Ascending aorta (tissue), 2 donors: ENCODE measurements at regions of chr4 and their contacts with region 1.

Region 1: DNA sequence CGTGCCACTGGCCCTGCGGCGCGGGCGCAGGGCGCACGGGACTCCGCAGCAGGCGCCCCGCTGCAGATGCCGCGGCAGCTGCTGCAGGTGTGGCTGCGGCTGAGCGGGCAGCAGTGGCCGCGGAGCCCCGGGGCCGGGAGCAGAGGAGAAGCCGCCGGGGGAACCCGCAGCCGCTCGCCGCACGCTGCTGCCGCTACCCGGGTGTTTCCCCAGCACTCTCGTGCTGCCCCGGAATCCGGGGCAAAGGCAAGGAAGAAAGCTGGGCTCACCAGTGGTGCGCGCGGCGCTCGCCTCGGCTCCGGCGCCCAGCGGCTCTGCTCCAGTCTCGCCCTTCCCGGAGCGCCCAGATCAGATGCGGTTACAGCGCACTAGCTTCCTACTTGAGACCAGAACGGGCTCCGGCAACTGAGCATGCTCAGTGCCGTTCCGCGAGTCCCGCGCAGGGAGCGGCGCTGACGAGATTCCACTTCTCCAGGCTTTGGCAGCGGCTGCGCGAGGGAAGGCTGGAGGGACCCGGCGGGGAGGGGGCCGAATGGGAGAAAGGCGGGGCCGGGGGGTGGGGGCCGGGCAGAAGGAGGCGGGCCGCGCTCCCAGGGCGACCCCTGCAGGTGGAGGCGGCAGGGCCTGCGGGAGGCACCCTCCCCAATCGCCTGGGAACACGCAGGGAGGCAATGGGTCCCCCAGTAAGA is at the start of gene APBB2:
- DNase-seq: peak; percentile 69 to 97
- H3K4me3 ChIP-seq: peak within 1 kb of the TSS; percentile 88 to 92
- H3K27ac ChIP-seq: peak within 1 kb of the TSS; percentile 87 to 91
- H3K4me1 ChIP-seq: peaks cover 7 to 16% of the 10 kb centered on the region in 2 donors
- H3K27me3 ChIP-seq: no peaks in the 10 kb centered on the region
- CTCF ChIP-seq: peak; percentile 63 to 92 (median 88)
- total RNA-seq, gene APBB2: 51.4 TPM

Region 2: DNA sequence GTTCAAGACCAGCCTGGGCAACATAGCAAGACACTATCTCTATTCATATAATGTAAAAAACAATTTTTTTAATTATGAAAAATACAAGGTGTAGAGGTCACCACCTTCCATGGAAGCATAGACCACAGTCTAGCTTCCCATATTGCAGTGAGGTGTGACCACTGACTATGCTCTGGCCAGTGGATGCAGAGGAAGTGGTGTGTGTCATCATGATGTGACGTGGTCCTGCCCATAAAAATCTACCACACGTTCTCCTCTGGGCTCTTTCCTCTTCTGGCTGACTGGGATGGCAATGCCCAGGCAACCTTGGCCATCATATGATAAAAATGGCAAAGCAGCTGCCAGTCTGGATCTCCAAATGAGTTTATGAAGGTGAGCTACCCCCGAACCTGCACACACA is 650.3 kb before region 1 on chr4:
- intact Hi-C with region 1: no loop called
- DNase-seq: no peak
- H3K4me3 ChIP-seq: no peak overlapping the region
- H3K27ac ChIP-seq: no peak overlapping the region
- H3K4me1 ChIP-seq: no peaks in the 10 kb centered on the region
- H3K27me3 ChIP-seq: no peaks in the 10 kb centered on the region
- CTCF ChIP-seq: no peak

Region 3: DNA sequence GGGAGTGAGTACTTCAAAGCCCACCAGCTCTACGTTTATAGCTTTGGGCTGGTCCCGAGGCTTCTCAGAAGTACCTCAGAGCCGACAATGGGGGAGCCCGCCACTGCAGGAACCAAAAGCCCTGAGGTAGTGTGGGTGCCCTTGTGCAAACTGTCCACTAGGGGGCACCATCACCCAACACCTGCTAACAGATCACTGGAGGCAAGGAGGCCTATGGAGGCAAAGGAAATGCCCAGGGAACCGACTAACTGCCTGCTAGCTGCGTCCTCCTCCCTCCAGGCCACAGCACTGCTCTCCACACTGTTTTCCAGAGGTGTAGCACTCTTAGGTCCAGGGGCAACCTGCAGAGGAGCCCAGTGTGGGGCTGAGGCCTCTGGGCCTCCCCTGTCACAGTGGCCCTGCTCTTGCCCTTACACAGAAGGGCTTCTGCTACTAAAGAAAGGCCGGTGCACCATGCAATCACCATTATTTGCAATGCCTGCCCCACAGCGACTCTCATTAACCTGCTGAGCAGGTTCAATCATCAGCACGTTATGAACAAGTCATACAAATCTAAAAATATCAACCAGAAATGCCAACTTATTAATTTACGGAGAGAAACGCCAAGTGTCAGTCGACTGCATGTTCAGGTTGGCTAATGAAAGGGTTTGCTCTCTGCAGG is 305.4 kb before region 1 on chr4:
- intact Hi-C with region 1: loop called (anchors 1 kb)
- DNase-seq: peak; percentile 26 to 90
- H3K4me3 ChIP-seq: peak overlapping the region in 1 of 2 donors; percentile 4
- H3K27ac ChIP-seq: peak overlapping the region; percentile 79 to 91
- H3K4me1 ChIP-seq: peaks cover 12 to 25% of the 10 kb centered on the region in 2 donors
- H3K27me3 ChIP-seq: no peaks in the 10 kb centered on the region
- CTCF ChIP-seq: peak; percentile 92 to 94 (median 92)

Region 4: DNA sequence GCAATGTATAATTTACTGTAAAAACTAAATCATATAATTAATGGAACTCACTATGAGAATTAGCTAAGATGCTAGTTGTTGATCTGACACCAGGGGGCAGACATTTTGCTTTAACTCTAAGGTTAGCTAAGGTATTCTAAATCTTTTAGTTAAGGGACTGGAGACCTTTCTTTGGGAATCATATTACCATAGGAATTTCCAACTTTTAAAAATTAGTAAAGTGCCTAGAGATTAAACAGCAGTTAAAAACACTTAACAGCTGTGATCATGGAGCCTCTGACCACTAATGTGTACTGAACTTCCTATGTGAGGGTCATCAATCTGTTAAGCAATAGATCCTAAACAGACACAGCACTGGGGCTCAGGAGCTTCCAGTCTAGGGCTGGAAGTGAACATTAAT is 237.9 kb before region 1 on chr4:
- intact Hi-C with region 1: loop called (anchors 1 kb)
- DNase-seq: no peak
- H3K4me3 ChIP-seq: no peak overlapping the region
- H3K27ac ChIP-seq: no peak overlapping the region
- H3K4me1 ChIP-seq: no peaks in the 10 kb centered on the region
- H3K27me3 ChIP-seq: no peaks in the 10 kb centered on the region
- CTCF ChIP-seq: peak; percentile 50 to 79 (median 53)

Region 5: GRCh38 chr4:41120297-41121217 is 93.7 kb before region 1 on chr4:
- intact Hi-C with region 1: loop called (anchors 2 kb)
- DNase-seq: peak; percentile 20 to 85
- H3K4me3 ChIP-seq: peak overlapping the region; percentile 30 to 46
- H3K27ac ChIP-seq: peak overlapping the region; percentile 69 to 70
- H3K4me1 ChIP-seq: peaks cover 4 to 37% of the 10 kb centered on the region in 2 donors
- H3K27me3 ChIP-seq: no peaks in the 10 kb centered on the region
- CTCF ChIP-seq: no peak

Region 6: GRCh38 chr4:41160012-41160789 is 54.1 kb before region 1 on chr4:
- intact Hi-C with region 1: loop called (anchors 2 kb)
- DNase-seq: no peak
- H3K4me3 ChIP-seq: no peak overlapping the region
- H3K27ac ChIP-seq: no peak overlapping the region
- H3K4me1 ChIP-seq: peaks cover 0 to 21% of the 10 kb centered on the region in 2 donors
- H3K27me3 ChIP-seq: no peaks in the 10 kb centered on the region
- CTCF ChIP-seq: no peak

Region 7: DNA sequence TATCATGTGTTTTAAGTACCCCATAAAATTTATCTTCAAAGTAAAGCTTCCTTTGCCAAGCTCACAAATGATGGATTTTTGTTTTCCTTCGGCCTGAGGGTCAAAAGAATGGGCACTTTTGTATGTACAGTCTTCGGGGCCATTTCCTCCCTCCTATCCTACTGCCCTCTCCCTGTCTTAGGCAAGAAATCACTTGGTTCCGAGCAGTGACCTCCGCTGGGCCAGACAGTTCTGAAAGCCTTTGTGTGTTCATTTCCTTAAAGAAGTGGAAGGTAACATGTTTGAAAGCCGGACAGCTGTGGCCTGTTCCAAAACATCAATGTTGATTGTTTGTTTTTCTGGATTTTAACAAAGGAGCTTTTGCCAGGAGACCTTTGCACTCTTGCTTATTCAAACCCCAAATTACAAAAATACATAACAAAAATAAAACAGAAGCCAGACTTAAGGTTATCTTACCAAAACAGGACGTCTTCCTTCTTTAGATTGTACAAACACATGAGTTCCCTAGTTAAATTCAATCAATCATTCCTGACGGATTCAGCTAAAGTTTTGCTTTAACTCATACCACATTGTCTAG is 213.1 kb after region 1 on chr4:
- intact Hi-C with region 1: no loop called
- DNase-seq: no peak
- H3K4me3 ChIP-seq: no peak overlapping the region
- H3K27ac ChIP-seq: peak overlapping the region; percentile 73 to 78
- H3K4me1 ChIP-seq: peaks cover 16 to 61% of the 10 kb centered on the region in 2 donors
- H3K27me3 ChIP-seq: no peaks in the 10 kb centered on the region
- CTCF ChIP-seq: no peak